ENCODE measurements at regions of chr17 and their contacts with region 1.

Region 1: DNA sequence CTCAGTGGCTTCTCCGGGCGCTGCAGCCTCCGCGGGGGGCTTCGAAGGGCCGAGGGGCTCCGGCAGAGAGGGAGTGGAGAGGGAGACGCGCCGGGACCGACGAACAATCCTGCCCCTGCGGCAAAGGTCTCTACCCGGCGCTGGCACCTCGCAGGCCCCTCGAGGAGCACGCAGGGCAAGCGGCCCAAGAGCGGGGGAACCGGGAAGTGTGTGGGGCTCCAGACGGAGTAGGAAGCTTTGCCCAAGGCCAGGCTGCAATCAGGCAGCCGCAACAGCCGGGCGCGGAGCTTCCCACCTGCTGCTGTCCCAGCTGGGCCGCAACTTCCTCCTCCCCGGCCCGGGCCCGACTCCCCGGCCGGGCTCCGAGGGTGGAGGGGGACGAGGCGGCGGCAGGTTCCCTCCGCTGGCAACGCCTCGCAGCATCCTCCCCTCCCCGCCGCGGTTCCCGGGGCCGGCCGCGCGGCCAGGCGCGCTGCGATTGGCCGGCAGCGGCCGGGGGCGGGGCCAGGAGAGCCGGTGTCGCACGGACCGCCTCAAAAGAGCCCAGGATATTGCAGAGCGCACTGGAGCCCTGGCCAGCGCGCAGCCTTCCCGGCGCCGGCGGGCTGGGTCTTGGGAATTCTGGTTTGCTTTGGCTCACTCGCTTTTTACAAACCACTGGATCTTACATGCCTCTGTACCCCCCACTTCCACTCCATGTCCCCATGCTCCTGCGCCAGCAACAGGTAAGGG is at the start of gene KCNJ2:
- DNase-seq: peak; percentile 93
- H3K4me3 ChIP-seq: peak within 1 kb of the TSS; percentile 85 to 97 (median 95)
- H3K27ac ChIP-seq: peak within 1 kb of the TSS; percentile 87
- H3K4me1 ChIP-seq: peaks cover 58% of the 10 kb centered on the region
- H3K27me3 ChIP-seq: no peaks in the 10 kb centered on the region
- CTCF ChIP-seq: no peak
- POLR2A ChIP-seq: peak; percentile 95
- total RNA-seq, gene KCNJ2: 11.5 and 15.5 TPM in 2 replicates

Region 2: DNA sequence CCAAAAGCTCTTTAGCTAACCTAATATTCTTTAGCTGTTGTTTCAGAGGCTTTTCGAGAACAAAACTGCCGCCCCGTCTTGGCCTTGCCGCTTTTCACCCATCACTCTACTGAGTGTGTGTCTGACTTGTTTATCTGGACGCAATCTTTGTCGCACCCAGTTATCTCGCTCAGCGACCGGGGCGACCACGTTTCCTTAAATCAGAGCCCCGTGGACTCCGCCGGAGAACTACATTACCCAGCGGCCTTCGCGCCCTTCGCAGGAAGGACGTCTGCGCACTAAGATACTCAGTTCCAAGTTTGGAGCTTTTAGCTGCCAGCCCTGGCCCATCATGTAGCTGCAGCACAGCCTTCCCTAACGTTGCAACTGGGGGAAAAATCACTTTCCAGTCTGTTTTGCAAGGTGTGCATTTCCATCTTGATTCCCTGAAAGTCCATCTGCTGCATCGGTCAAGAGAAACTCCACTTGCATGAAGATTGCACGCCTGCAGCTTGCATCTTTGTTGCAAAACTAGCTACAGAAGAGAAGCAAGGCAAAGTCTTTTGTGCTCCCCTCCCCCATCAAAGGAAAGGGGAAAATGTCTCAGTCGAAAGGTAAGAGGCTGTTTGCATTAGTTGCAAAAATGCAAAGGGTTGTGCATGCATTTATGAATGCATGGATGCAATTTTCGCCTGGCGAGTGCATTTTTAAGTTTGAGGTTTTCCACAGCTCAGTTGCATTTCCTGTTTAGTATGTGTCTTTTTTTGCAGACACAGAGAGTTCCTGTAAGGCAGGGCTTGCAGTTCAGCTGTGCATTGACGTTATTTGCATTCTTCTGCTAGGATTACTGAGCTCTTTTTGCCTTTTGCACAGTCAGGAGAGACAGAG is 754.5 kb before region 1 on chr17 and contains the start of gene MAP2K6:
- CTCF ChIA-PET with region 1: no interaction called
- POLR2A ChIA-PET with region 1: no interaction called
- dilution Hi-C with region 1: no loop called
- intact Hi-C with region 1: loop called (anchors 5 kb)
- DNase-seq: peak; percentile 86
- H3K4me3 ChIP-seq: peak within 1 kb of the TSS; percentile 42 to 70 (median 48)
- H3K27ac ChIP-seq: peak within 1 kb of the TSS; percentile 35
- H3K4me1 ChIP-seq: peaks cover 48% of the 10 kb centered on the region
- H3K27me3 ChIP-seq: no peaks in the 10 kb centered on the region
- CTCF ChIP-seq: no peak
- POLR2A ChIP-seq: peak; percentile 50
- total RNA-seq, gene MAP2K6: 11.4 and 13.9 TPM in 2 replicates

Region 3: DNA sequence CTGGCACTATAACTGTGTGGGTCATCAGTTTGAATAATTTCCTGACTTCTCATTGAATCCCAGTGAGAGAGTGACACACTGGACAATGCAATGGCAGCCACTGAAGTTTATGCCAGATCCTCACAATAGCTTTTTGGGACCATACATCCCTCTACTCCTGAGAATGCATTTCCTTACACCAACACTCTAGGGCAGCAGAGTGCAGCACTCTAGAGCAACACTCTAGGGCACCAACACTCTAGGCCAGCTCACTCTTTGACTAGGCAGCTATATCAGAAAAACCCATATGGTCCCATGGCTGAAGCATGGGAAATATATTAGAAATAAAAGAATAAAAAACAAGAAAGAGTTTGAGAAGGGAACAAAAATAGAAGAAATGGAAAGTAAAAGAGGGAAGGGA is 445.4 kb before region 1 on chr17:
- CTCF ChIA-PET with region 1: interaction called, 10 read pairs
- POLR2A ChIA-PET with region 1: no interaction called
- dilution Hi-C with region 1: no loop called
- intact Hi-C with region 1: loop called (anchors 5 kb)
- DNase-seq: peak; percentile 25
- H3K4me3 ChIP-seq: no peak overlapping the region
- H3K27ac ChIP-seq: no peak overlapping the region
- H3K4me1 ChIP-seq: no peaks in the 10 kb centered on the region
- H3K27me3 ChIP-seq: no peaks in the 10 kb centered on the region
- CTCF ChIP-seq: peak; percentile 11 to 18
- POLR2A ChIP-seq: no peak

Region 4: DNA sequence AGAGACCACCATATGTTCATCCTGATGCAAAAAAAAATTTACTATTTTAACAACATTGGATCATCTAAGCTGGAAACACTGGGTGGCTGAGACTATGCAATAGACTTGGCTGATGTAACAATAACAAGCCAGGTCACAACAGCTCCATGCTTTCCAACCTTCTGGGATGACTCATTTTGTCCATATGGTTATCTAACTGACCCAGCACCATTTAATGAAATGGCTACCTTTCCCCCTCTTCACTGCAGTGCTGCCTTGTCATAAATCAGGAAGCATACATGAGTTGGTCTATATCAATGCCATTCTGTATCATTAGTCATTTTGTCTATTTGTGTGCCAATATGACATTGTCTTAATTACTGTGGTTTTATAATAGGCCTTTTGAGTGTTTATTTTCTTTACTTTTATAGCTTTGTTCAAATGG is 311.7 kb before region 1 on chr17:
- CTCF ChIA-PET with region 1: interaction called, 5 read pairs
- POLR2A ChIA-PET with region 1: no interaction called
- dilution Hi-C with region 1: no loop called
- intact Hi-C with region 1: loop called (anchors 1 kb)
- DNase-seq: peak; percentile 95
- H3K4me3 ChIP-seq: no peak overlapping the region
- H3K27ac ChIP-seq: peak overlapping the region; percentile 35
- H3K4me1 ChIP-seq: peaks cover 14% of the 10 kb centered on the region
- H3K27me3 ChIP-seq: no peaks in the 10 kb centered on the region
- CTCF ChIP-seq: no peak
- POLR2A ChIP-seq: peak; percentile 53

Region 5: DNA sequence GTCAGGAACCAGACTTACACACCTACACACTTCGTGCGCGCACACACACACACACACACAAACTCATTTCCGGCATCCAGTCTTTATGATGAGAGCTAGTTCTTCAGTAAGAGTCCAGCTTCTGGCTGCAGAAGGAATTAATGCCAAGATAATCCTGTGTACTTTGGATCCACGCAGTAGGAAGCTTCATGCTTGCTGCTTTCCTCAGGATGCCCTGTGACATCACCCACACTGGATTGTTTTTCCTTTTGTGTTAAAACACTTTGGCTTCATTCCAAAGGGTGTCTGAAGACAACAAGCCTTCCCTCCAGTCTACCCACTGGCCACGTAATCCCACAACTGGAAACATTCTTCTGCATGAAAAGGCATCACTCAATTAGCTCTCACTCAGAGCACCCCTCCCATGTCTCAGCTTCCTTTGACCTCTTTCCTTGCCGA is 58.7 kb before region 1 on chr17:
- CTCF ChIA-PET with region 1: interaction called, 3 read pairs
- POLR2A ChIA-PET with region 1: no interaction called
- dilution Hi-C with region 1: no loop called
- intact Hi-C with region 1: loop called (anchors 2 kb)
- DNase-seq: peak; percentile 99
- H3K4me3 ChIP-seq: no peak overlapping the region
- H3K27ac ChIP-seq: peak overlapping the region; percentile 82
- H3K4me1 ChIP-seq: peaks cover 27% of the 10 kb centered on the region
- H3K27me3 ChIP-seq: no peaks in the 10 kb centered on the region
- CTCF ChIP-seq: no peak
- POLR2A ChIP-seq: peak; percentile 42

Region 6: GRCh38 chr17:70158180-70158579 is 11.0 kb before region 1 on chr17:
- CTCF ChIA-PET with region 1: interaction called, 37 read pairs
- POLR2A ChIA-PET with region 1: interaction called, 10 read pairs
- dilution Hi-C with region 1: no loop called
- intact Hi-C with region 1: loop called (anchors 1 kb)
- DNase-seq: peak; percentile 97
- H3K4me3 ChIP-seq: peak overlapping the region; percentile 27 to 77 (median 47)
- H3K27ac ChIP-seq: peak overlapping the region; percentile 100
- H3K4me1 ChIP-seq: peaks cover 44% of the 10 kb centered on the region
- H3K27me3 ChIP-seq: no peaks in the 10 kb centered on the region
- CTCF ChIP-seq: no peak
- POLR2A ChIP-seq: no peak

Region 7: GRCh38 chr17:70622368-70623260 is 453.5 kb after region 1 on chr17:
- CTCF ChIA-PET with region 1: interaction called, 6 read pairs
- POLR2A ChIA-PET with region 1: no interaction called
- dilution Hi-C with region 1: no loop called
- intact Hi-C with region 1: loop called (anchors 1 kb)
- DNase-seq: peak; percentile 76
- H3K4me3 ChIP-seq: no peak overlapping the region
- H3K27ac ChIP-seq: no peak overlapping the region
- H3K4me1 ChIP-seq: peaks cover 5% of the 10 kb centered on the region
- H3K27me3 ChIP-seq: no peaks in the 10 kb centered on the region
- CTCF ChIP-seq: peak; percentile 64 to 79
- POLR2A ChIP-seq: no peak

Measured in endothelial cell of umbilical vein (primary cell).